Right cardiac atrium (tissue), 5 donors: ENCODE measurements at regions of chr6 and their contacts with region 1.

Region 1: DNA sequence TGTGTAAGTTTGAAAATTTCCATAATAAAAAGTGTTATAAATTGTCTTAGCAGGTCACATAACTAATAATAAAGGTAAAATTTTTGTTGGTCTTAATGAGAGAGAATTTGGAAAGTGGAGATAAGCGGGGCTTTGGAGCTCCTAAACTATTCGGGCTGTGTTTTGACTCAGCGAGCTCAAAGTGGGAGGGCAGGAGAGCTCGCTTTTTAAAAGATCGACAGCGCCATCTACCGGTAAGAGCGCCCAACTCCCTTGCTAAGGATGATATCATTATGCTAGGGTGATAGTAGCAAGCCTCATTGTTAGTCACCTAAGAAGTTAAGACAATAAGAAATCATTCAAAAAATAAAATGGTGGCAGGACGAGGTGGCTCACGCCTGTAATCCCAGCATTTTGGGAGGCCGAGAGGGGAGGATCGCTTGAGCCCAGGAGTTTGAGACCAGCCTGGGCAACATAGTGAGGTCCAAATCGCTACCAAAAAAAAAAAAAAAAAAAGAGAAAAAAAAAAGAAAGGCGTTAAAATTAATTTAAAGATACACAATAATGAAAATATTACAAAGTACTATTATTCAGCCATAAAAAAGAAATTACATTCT is 24.8 kb downstream of the C6orf15 start:
- DNase-seq: peak; percentile 86 to 94 (median 90)
- ATAC-seq: peak; percentile 95
- H3K4me3 ChIP-seq: no peak overlapping the region
- H3K27ac ChIP-seq: no peak overlapping the region
- H3K4me1 ChIP-seq: peaks cover 2% of the 10 kb centered on the region
- H3K27me3 ChIP-seq: no peaks in the 10 kb centered on the region

Region 2: GRCh38 chr6:30672445-30673253 is 414.9 kb before region 1 on chr6 and contains the start of gene DHX16:
- intact Hi-C with region 1: loop called in 1 of 4 experiments (anchors 10 kb)
- DNase-seq: peak; percentile 96 to 99 (median 97)
- ATAC-seq: peak; percentile 87 to 89
- H3K4me3 ChIP-seq: peak within 1 kb of the TSS; percentile 90
- H3K27ac ChIP-seq: peak within 1 kb of the TSS; percentile 61
- H3K4me1 ChIP-seq: peaks cover 2% of the 10 kb centered on the region
- H3K27me3 ChIP-seq: no peaks in the 10 kb centered on the region
- total RNA-seq, gene DHX16: 18.2 to 23.4 (median 20.4) TPM

Region 3: GRCh38 chr6:30707281-30707872 is 380.2 kb before region 1 on chr6:
- intact Hi-C with region 1: no loop called
- DNase-seq: peak in 2 of 3 donors; percentile 17 to 19
- ATAC-seq: peak in 1 of 2 donors; percentile 10
- H3K4me3 ChIP-seq: no peak overlapping the region
- H3K27ac ChIP-seq: no peak overlapping the region
- H3K4me1 ChIP-seq: no peaks in the 10 kb centered on the region
- H3K27me3 ChIP-seq: no peaks in the 10 kb centered on the region

Region 4: GRCh38 chr6:30836431-30836866 is 251.1 kb before region 1 on chr6:
- intact Hi-C with region 1: loop called in 1 of 4 experiments (anchors 10 kb)
- DNase-seq: peak in 2 of 3 donors; percentile 57 to 72
- ATAC-seq: peak; percentile 91 to 95
- H3K4me3 ChIP-seq: no peak overlapping the region
- H3K27ac ChIP-seq: no peak overlapping the region
- H3K4me1 ChIP-seq: peaks cover 2% of the 10 kb centered on the region
- H3K27me3 ChIP-seq: no peaks in the 10 kb centered on the region

Region 5: GRCh38 chr6:30963641-30964040 is 124.0 kb before region 1 on chr6:
- intact Hi-C with region 1: no loop called
- DNase-seq: no peak
- ATAC-seq: no peak
- H3K4me3 ChIP-seq: no peak overlapping the region
- H3K27ac ChIP-seq: no peak overlapping the region
- H3K4me1 ChIP-seq: no peaks in the 10 kb centered on the region
- H3K27me3 ChIP-seq: no peaks in the 10 kb centered on the region